HCT116 (cell line): ENCODE measurements at regions of chr1 and their contacts with region 1.

Region 1: DNA sequence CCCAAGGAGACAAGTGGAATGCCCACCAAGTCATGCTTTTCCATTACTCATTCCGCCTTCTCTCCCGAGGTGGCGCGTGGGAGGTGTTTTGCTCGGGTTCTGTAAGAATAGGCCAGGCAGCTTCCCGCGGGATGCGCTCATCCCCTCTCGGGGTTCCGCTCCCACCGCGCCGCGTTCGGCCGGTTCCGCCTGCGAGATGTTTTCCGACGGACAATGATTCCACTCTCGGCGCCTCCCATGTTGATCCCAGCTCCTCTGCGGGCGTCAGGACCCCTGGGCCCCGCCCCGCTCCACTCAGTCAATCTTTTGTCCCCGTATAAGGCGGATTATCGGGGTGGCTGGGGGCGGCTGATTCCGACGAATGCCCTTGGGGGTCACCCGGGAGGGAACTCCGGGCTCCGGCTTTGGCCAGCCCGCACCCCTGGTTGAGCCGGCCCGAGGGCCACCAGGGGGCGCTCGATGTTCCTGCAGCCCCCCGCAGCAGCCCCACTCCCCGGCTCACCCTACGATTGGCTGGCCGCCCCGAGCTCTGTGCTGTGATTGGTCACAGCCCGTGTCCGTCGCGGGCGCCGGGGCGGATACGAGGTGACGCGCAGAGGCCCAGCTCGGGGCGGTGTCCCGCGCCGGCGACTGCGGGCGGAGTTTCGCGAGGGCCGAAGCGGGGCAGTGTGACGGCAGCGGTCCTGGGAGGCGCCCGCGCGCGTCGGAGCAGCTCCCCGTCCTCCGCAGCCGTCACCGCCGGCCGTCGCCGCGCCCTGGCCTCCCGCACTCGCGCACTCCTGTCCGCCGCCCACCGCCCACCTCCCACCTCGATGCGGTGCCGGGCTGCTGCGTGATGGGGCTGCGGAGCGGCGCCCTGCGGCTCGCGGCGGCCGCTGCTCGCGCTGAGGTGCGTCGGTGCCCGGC is at the start of gene KIF1B:
- DNase-seq: peak; percentile 93
- ATAC-seq: peak; percentile 96
- H3K4me3 ChIP-seq: peak within 1 kb of the TSS; percentile 93 to 99
- H3K27ac ChIP-seq: peak within 1 kb of the TSS; percentile 74
- H3K4me1 ChIP-seq: peaks cover 11 to 27% of the 10 kb centered on the region in 2 experiments
- H3K27me3 ChIP-seq: no peaks in the 10 kb centered on the region
- CTCF ChIP-seq: peak; percentile 84 to 94 (median 88)
- POLR2A ChIP-seq: peak; percentile 38
- RAD21 ChIP-seq: peak; percentile 80
- total RNA-seq, gene KIF1B: 28.1 TPM

Region 2: DNA sequence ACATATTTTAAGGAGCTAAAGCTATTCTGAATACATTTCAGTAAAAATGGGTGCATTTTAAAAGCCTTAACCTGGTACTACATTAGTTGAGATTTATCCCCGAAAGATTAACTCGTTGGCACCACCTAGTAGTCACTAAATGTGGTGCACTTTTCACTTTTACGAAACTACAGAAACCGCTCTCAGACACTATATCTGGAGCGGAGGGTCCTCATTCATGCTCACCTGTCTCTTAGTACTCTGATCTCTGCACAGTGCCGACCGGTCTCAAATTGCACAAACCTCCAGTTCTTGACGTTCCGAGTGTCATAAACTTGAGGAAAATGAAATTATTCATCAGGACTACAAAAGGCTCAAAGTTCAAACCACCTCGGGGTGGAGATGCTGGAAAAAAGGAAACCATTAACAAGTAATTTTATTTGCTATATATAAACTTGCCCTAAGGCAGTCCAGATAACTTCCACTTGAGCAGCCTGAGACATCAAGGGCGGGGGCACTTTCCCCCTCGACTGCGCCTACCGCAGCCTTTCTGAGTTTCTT is 267.7 kb before region 1 on chr1:
- CTCF ChIA-PET with region 1: no interaction called
- POLR2A ChIA-PET with region 1: no interaction called
- RAD21 ChIA-PET with region 1: no interaction called
- intact Hi-C with region 1: no loop called
- DNase-seq: no peak
- ATAC-seq: peak; percentile 46
- H3K4me3 ChIP-seq: peak overlapping the region; percentile 84 to 90
- H3K27ac ChIP-seq: peak overlapping the region; percentile 83
- H3K4me1 ChIP-seq: peaks cover 4 to 6% of the 10 kb centered on the region in 2 experiments; a peak in 2 of 4 replicates
- H3K27me3 ChIP-seq: no peaks in the 10 kb centered on the region
- CTCF ChIP-seq: peak; percentile 43 to 88 (median 68); a peak in 5 of 6 replicates
- POLR2A ChIP-seq: no peak
- RAD21 ChIP-seq: peak; percentile 86

Region 3: GRCh38 chr1:10225573-10225972 is 15.4 kb after region 1 on chr1:
- CTCF ChIA-PET with region 1: interaction called, 27 read pairs
- POLR2A ChIA-PET with region 1: interaction called, 4 read pairs
- RAD21 ChIA-PET with region 1: no interaction called
- intact Hi-C with region 1: no loop called
- DNase-seq: no peak
- ATAC-seq: no peak
- H3K4me3 ChIP-seq: no peak overlapping the region
- H3K27ac ChIP-seq: no peak overlapping the region
- H3K4me1 ChIP-seq: peaks cover 5 to 17% of the 10 kb centered on the region in 2 experiments
- H3K27me3 ChIP-seq: no peaks in the 10 kb centered on the region
- CTCF ChIP-seq: no peak
- POLR2A ChIP-seq: no peak
- RAD21 ChIP-seq: no peak

Region 4: GRCh38 chr1:10338047-10338446 is 127.9 kb after region 1 on chr1:
- CTCF ChIA-PET with region 1: interaction called, 5 read pairs
- POLR2A ChIA-PET with region 1: interaction called, 4 read pairs
- RAD21 ChIA-PET with region 1: interaction called in 1 of 2 experiments, 3 read pairs
- intact Hi-C with region 1: loop called (anchors 10 kb)
- DNase-seq: peak; percentile 16
- ATAC-seq: peak; percentile 96
- H3K4me3 ChIP-seq: no peak overlapping the region
- H3K27ac ChIP-seq: no peak overlapping the region
- H3K4me1 ChIP-seq: peaks cover 3 to 7% of the 10 kb centered on the region in 2 experiments
- H3K27me3 ChIP-seq: no peaks in the 10 kb centered on the region
- CTCF ChIP-seq: peak; percentile 70 to 89 (median 86); a peak in 5 of 6 replicates
- POLR2A ChIP-seq: no peak
- RAD21 ChIP-seq: peak; percentile 91

Region 5: DNA sequence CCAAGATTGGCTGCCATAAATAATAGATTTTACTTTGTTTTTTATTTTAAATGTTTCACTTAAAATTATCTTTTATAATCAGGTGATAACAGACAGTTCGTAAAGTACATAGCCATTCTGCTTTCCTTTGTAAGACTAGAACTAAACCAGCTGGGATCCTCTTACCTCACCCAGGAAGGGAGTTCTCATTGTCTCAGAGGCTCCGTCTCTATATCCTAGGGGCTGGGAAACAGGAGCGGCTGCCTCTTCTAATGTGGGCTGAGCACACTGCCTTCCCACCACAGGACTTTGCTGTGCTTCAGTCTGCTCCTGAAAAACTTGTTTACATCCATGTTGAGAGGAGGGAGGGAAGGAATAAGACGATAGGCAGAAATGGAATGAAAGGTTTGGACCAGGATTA is 143.1 kb after region 1 on chr1:
- CTCF ChIA-PET with region 1: no interaction called
- POLR2A ChIA-PET with region 1: no interaction called
- RAD21 ChIA-PET with region 1: no interaction called
- intact Hi-C with region 1: no loop called
- DNase-seq: no peak
- ATAC-seq: no peak
- H3K4me3 ChIP-seq: no peak overlapping the region
- H3K27ac ChIP-seq: no peak overlapping the region
- H3K4me1 ChIP-seq: no peaks in the 10 kb centered on the region
- H3K27me3 ChIP-seq: no peaks in the 10 kb centered on the region
- CTCF ChIP-seq: no peak
- POLR2A ChIP-seq: no peak
- RAD21 ChIP-seq: no peak